Esophagus muscularis mucosa (tissue), 4 donors: ENCODE measurements at regions of chr7 and their contacts with region 1.

Region 1: GRCh38 chr7:104231054-104232046 is 23.5 kb upstream of the ORC5 start:
- DNase-seq: no peak
- H3K4me3 ChIP-seq: no peak overlapping the region
- H3K27ac ChIP-seq: no peak overlapping the region
- H3K4me1 ChIP-seq: peaks cover 0 to 7% (median 0%) of the 10 kb centered on the region in 4 donors
- H3K27me3 ChIP-seq: peaks cover 0 to 13% (median 0%) of the 10 kb centered on the region in 4 donors
- CTCF ChIP-seq: peak; percentile 71 to 87 (median 76)
- EP300 ChIP-seq: no peak
- POLR2A ChIP-seq: no peak

Region 2: DNA sequence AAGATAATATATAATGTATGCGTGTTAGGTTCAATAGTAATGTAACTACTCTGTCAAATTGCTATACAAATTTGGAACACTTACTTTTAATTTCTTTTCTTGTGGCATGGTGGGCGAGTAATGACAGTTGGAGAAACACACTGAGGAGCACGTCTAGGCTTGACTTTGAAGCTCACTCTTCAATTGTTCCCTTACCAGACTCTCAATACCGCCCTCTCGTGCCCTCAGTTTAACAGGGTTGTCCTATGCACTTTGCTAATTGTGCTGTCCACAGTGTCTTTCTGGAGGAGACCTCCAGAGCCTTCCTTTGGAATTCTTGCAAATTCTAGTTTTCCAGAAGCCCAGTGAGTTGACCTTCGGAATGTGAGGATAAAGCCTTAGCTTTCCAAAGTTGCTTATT is 134.7 kb before region 1 on chr7:
- intact Hi-C with region 1: no loop called
- DNase-seq: no peak
- H3K4me3 ChIP-seq: no peak overlapping the region
- H3K27ac ChIP-seq: no peak overlapping the region
- H3K4me1 ChIP-seq: no peaks in the 10 kb centered on the region
- H3K27me3 ChIP-seq: peaks cover 0 to 4% (median 0%) of the 10 kb centered on the region in 4 donors
- CTCF ChIP-seq: no peak
- EP300 ChIP-seq: no peak
- POLR2A ChIP-seq: no peak

Region 3: GRCh38 chr7:104126411-104126841 is 104.9 kb before region 1 on chr7:
- intact Hi-C with region 1: no loop called
- DNase-seq: no peak
- H3K4me3 ChIP-seq: no peak overlapping the region
- H3K27ac ChIP-seq: no peak overlapping the region
- H3K4me1 ChIP-seq: no peaks in the 10 kb centered on the region
- H3K27me3 ChIP-seq: no peaks in the 10 kb centered on the region
- CTCF ChIP-seq: no peak
- EP300 ChIP-seq: no peak
- POLR2A ChIP-seq: no peak

Region 4: DNA sequence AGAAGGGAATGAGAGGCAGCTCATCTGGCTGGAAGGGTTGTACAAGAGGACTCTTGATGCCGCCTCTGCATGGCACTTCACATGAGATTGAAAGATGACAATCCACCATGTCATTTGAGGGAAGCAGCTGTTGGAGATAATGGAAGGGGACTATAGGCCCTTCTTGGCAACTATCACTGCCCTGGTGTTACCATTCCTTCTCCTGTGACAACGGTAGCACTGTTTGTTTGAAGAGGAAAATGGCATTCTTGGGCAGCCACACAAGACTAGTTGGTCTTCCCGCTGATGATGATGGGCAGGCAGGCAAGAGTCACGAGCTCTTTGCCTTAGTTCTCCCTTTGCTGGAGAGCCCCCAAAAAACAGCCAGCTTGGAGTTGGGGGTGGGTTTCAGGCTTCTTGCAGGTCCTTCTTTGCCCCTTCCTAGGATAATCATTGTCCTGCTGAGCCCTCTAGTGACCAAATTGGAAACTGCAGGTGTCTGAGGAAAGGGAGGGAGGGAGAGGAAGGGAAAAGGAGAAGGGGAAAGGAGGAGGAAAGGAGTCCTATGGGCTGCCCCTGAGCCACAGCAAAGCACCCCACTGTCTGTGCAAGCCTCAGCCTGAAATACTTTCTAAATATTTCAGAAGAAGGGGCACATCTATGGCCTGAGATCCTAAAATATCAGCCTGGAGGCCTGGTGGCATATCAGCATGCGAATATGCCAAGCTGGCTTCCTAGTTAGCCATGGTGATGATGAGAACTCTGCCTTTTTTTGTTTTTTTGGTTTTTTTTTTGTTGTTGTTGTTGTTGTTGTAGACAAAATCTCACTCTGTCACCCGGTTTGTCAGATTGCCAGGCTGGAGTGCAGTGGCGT is 617.0 kb after region 1 on chr7:
- intact Hi-C with region 1: loop called (anchors 5 kb)
- DNase-seq: no peak
- H3K4me3 ChIP-seq: no peak overlapping the region
- H3K27ac ChIP-seq: no peak overlapping the region
- H3K4me1 ChIP-seq: no peaks in the 10 kb centered on the region
- H3K27me3 ChIP-seq: peaks cover 0 to 10% (median 2%) of the 10 kb centered on the region in 4 donors
- CTCF ChIP-seq: peak; percentile 72 to 92 (median 72)
- EP300 ChIP-seq: no peak
- POLR2A ChIP-seq: no peak

Region 5: DNA sequence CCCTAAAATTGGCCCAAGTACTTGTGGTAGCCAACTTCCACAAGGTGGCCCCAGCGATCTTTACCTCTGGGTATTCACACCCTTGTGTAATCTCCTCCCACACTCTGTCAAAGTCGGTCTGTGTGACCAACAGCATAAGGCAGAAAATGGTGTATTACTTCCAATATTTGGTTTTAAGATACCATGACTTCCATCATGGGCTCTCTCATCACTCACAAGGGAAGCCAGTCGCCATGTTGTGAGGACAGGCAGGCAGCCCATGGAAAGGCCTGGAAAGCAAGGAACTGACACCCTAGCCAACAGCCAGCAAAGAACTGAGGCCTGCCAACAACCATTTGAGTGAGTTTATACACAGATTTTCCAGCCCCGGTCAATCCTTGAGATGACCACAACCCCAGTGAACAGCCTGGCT is 691.7 kb after region 1 on chr7:
- intact Hi-C with region 1: loop called (anchors 5 kb)
- DNase-seq: no peak
- H3K4me3 ChIP-seq: no peak overlapping the region
- H3K27ac ChIP-seq: peak overlapping the region; percentile 24 to 61 (median 47)
- H3K4me1 ChIP-seq: peaks cover 9 to 17% (median 15%) of the 10 kb centered on the region in 4 donors
- H3K27me3 ChIP-seq: no peaks in the 10 kb centered on the region
- CTCF ChIP-seq: peak; percentile 73 to 79 (median 74)
- EP300 ChIP-seq: no peak
- POLR2A ChIP-seq: no peak

Region 6: DNA sequence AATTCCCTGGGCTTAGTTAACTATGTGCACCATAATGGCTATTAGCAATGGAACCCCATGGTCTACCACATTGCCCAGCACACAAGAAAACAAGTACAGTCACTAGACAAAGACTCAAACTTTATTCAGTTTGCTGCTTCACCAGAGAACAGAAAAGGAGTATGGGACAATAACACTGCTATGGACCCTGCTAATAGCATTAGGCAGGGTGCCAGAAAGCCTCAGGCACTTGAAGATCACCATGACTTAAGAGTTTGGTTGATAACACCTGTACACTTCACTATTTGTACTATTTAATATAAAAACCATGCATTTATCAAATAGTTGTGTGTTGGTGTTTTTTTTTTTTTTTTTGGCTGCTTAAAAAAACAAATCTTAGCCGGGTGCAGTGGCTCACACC is 942.2 kb after region 1 on chr7:
- intact Hi-C with region 1: no loop called
- DNase-seq: no peak
- H3K4me3 ChIP-seq: no peak overlapping the region
- H3K27ac ChIP-seq: no peak overlapping the region
- H3K4me1 ChIP-seq: peaks cover 0 to 10% (median 6%) of the 10 kb centered on the region in 4 donors
- H3K27me3 ChIP-seq: no peaks in the 10 kb centered on the region
- CTCF ChIP-seq: no peak
- EP300 ChIP-seq: no peak
- POLR2A ChIP-seq: no peak